CD4-positive, alpha-beta T cell (primary cell): ENCODE measurements at regions of chrX and their contacts with region 1.

Region 1: DNA sequence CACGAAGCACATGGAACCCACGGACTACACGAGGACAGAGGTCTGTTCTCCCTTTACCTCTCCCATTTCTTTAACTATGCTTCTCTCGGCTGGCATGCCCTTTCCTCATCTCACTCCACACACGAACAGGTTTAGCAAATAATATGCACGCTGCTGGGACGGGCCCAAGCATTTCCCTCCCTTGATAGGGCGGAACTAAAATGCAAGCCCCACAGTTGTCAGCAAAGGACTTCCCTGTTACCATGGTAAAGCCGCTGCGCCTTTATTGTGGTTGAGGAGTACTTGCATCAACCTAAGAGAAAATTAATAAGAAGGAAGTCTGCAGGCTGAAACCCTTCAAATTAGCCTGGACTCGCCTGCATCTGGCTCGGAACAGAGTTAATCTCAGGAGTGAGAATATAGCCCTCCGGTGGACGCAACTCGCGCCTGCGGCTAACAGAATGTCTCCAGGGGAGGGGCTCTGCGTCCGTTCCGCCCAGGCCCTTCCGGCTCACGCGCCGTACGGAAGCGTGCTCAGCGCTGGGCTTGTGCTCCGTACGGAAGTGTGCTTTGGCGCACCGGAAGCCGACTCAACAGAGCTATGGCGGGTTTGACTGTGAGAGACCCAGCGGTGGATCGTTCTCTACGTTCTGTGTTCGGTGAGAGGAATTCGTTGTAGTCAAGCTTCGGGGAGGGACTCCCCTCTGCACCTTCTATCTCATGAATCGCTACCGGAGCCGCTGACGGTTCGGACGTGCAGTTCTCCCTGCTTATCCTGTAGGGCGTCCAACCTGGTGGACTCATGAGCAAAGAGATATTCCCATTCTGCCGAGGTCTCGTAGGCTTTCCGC is at the start of gene CSTF2:
- DNase-seq: peak; percentile 62 to 91 (median 72)
- ATAC-seq: peak; percentile 93
- H3K4me3 ChIP-seq: peak within 1 kb of the TSS; percentile 88
- H3K4me3 Mint-ChIP-seq: peak within 1 kb of the TSS; percentile 87
- H3K27ac ChIP-seq: peak within 1 kb of the TSS; percentile 77 to 80
- H3K27ac Mint-ChIP-seq: peak within 1 kb of the TSS; percentile 84
- H3K4me1 ChIP-seq: peaks cover 8% of the 10 kb centered on the region
- H3K4me1 Mint-ChIP-seq: peaks cover 11% of the 10 kb centered on the region
- H3K27me3 ChIP-seq: no peaks in the 10 kb centered on the region
- H3K27me3 Mint-ChIP-seq: peaks cover 19% of the 10 kb centered on the region
- CTCF ChIP-seq: no peak
- total RNA-seq, gene CSTF2: 8.3 to 10.1 TPM

Region 2: GRCh38 chrX:100745798-100746537 is 74.1 kb before region 1 on chrX:
- CTCF ChIA-PET with region 1: no interaction called
- POLR2A ChIA-PET with region 1: no interaction called
- intact Hi-C with region 1: no loop called
- DNase-seq: no peak
- ATAC-seq: no peak
- H3K4me3 ChIP-seq: no peak overlapping the region
- H3K4me3 Mint-ChIP-seq: no peak overlapping the region
- H3K27ac ChIP-seq: no peak overlapping the region
- H3K27ac Mint-ChIP-seq: no peak overlapping the region
- H3K4me1 ChIP-seq: no peaks in the 10 kb centered on the region
- H3K4me1 Mint-ChIP-seq: no peaks in the 10 kb centered on the region
- H3K27me3 ChIP-seq: peaks cover 3 to 4% of the 10 kb centered on the region in 2 experiments
- H3K27me3 Mint-ChIP-seq: peaks cover 18% of the 10 kb centered on the region
- CTCF ChIP-seq: no peak

Region 3: GRCh38 chrX:101097546-101098453 is 277.7 kb after region 1 on chrX and contains the start of gene CENPI:
- CTCF ChIA-PET with region 1: no interaction called
- POLR2A ChIA-PET with region 1: interaction called, 4 read pairs
- intact Hi-C with region 1: loop called (anchors 5 kb)
- DNase-seq: peak; percentile 86 to 96 (median 91)
- ATAC-seq: peak; percentile 99
- H3K4me3 ChIP-seq: peak within 1 kb of the TSS; percentile 67
- H3K4me3 Mint-ChIP-seq: peak within 1 kb of the TSS; percentile 92
- H3K27ac ChIP-seq: peak within 1 kb of the TSS; percentile 66 to 87
- H3K27ac Mint-ChIP-seq: peak within 1 kb of the TSS; percentile 95
- H3K4me1 ChIP-seq: peaks cover 7% of the 10 kb centered on the region
- H3K4me1 Mint-ChIP-seq: peaks cover 22% of the 10 kb centered on the region
- H3K27me3 ChIP-seq: no peaks in the 10 kb centered on the region
- H3K27me3 Mint-ChIP-seq: no peaks in the 10 kb centered on the region
- CTCF ChIP-seq: no peak
- total RNA-seq, gene CENPI: 0.28 to 0.49 TPM

Region 4: DNA sequence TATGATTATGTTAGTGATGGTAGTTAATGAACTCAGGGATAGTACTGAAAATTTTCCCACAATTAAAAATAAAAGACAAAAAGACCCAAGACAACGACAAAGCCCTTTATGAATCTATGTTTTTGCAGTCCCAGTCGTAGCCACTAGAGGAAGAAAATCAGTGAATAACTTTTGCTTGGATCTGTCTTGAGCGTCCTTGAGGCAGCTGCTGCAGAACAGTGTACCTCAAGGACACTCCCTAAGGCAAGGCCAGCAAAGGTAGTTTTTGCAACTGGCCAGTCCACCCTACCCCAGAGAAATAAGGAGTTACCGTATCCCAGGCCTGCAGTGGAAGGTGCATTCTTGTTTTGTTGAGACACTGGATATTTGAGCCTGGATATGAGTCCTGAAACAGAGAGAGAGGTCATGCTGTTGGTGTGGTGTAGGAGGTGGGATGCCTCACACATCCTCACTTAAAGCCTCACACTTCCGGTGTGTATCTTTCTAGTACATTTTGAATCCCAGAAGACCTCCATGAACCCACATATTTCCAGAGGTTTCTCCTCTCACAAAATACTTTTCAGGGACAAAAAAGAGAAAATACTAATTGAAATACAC is 537.2 kb after region 1 on chrX:
- CTCF ChIA-PET with region 1: no interaction called
- POLR2A ChIA-PET with region 1: no interaction called
- intact Hi-C with region 1: loop called in 1 of 2 experiments (anchors 10 kb)
- DNase-seq: no peak
- ATAC-seq: no peak
- H3K4me3 ChIP-seq: no peak overlapping the region
- H3K4me3 Mint-ChIP-seq: no peak overlapping the region
- H3K27ac ChIP-seq: no peak overlapping the region
- H3K27ac Mint-ChIP-seq: no peak overlapping the region
- H3K4me1 ChIP-seq: no peaks in the 10 kb centered on the region
- H3K4me1 Mint-ChIP-seq: no peaks in the 10 kb centered on the region
- H3K27me3 ChIP-seq: no peaks in the 10 kb centered on the region
- H3K27me3 Mint-ChIP-seq: peaks cover 4% of the 10 kb centered on the region
- CTCF ChIP-seq: no peak

Region 5: GRCh38 chrX:101617211-101618191 is 797.4 kb after region 1 on chrX and contains the start of gene ARMCX6:
- CTCF ChIA-PET with region 1: no interaction called
- POLR2A ChIA-PET with region 1: no interaction called
- intact Hi-C with region 1: no loop called
- DNase-seq: peak; percentile 45 to 89 (median 60)
- ATAC-seq: peak; percentile 86
- H3K4me3 ChIP-seq: peak within 1 kb of the TSS; percentile 77
- H3K4me3 Mint-ChIP-seq: peak within 1 kb of the TSS; percentile 97
- H3K27ac ChIP-seq: peak within 1 kb of the TSS; percentile 34 to 41
- H3K27ac Mint-ChIP-seq: peak within 1 kb of the TSS; percentile 92
- H3K4me1 ChIP-seq: peaks cover 14% of the 10 kb centered on the region
- H3K4me1 Mint-ChIP-seq: peaks cover 21% of the 10 kb centered on the region
- H3K27me3 ChIP-seq: no peaks in the 10 kb centered on the region
- H3K27me3 Mint-ChIP-seq: no peaks in the 10 kb centered on the region
- CTCF ChIP-seq: no peak
- total RNA-seq, gene ARMCX6: 35.0 to 39.5 TPM

Region 6: GRCh38 chrX:101799387-101799786 is 979.3 kb after region 1 on chrX:
- CTCF ChIA-PET with region 1: no interaction called
- POLR2A ChIA-PET with region 1: no interaction called
- intact Hi-C with region 1: loop called in 1 of 2 experiments (anchors 5 kb)
- DNase-seq: peak; percentile 51 to 89 (median 70)
- ATAC-seq: peak; percentile 100
- H3K4me3 ChIP-seq: no peak overlapping the region
- H3K4me3 Mint-ChIP-seq: peak overlapping the region; percentile 44
- H3K27ac ChIP-seq: no peak overlapping the region
- H3K27ac Mint-ChIP-seq: peak overlapping the region; percentile 21
- H3K4me1 ChIP-seq: peaks cover 3% of the 10 kb centered on the region
- H3K4me1 Mint-ChIP-seq: peaks cover 12% of the 10 kb centered on the region
- H3K27me3 ChIP-seq: no peaks in the 10 kb centered on the region
- H3K27me3 Mint-ChIP-seq: no peaks in the 10 kb centered on the region
- CTCF ChIP-seq: peak; percentile 57